ENCODE measurements at regions of chr3 and their contacts with region 1.

Region 1: DNA sequence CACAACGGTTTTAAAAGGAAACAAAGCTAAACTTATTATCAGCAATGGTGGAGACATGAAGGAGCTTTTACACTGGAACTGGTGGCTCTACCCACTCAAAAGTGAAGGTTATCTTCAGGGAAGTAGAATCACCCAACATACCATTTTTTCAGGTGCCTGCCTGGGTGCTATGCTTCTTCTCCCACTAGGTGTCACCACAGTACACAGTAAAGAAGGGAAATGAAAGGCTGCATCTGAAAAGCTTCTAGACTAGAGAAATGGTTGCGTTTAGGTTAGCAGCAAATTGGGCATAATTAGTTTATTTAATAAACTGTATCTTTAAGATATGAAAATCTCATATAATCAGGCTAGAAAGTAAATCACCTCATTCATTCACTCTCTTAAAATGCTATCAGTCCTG is 47.0 kb upstream of the SELENOK start:
- DNase-seq: peak; percentile 25
- ATAC-seq: peak; percentile 67
- H3K4me3 ChIP-seq: no peak overlapping the region
- H3K27ac ChIP-seq: no peak overlapping the region
- H3K4me1 ChIP-seq: no peaks in the 10 kb centered on the region
- H3K27me3 ChIP-seq: no peaks in the 10 kb centered on the region; a peak in 2 of 5 replicates
- CTCF ChIP-seq: peak; percentile 79
- EP300 ChIP-seq: no peak
- POLR2A ChIP-seq: no peak
- RAD21 ChIP-seq: no peak

Region 2: DNA sequence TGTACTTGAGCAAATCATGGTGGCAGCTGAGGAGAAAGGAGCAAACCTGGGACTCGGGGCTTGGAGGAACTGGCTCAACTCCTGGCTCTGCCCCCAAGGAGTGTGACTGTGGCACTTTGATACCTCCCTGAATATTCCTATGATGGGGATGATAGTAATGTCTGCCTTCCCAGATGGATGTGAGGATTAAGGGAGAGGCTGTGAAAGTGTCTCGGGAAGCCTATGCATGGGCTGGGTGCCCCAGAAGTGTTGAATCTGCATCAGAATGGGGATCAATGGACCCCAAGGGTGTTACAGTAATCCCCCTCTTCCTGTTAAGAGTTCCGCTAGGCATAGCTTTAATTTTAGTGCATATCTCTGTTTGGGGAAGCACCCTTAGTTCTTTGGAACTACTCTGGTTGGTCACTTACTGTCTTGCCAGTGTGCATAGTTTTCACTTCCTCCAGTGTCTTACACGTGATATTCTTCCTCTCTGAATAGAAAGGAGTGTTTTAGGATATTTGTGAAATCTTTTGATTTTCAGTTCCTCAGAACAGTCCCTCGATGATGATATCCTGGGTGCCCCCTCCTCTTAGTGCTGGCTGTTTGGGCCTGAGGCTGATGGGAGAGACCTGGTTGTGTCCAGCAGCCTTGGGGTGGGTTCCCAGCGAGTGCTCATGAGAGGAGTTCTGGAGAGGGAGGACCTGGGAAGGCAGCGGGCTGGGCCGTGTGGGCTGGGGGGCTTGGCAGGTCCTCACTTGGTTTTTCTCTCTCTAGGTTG is 190.0 kb before region 1 on chr3:
- CTCF ChIA-PET with region 1: no interaction called
- POLR2A ChIA-PET with region 1: no interaction called
- in situ Hi-C with region 1: no loop called
- intact Hi-C with region 1: no loop called
- DNase-seq: no peak
- ATAC-seq: no peak
- H3K4me3 ChIP-seq: no peak overlapping the region
- H3K27ac ChIP-seq: no peak overlapping the region
- H3K4me1 ChIP-seq: no peaks in the 10 kb centered on the region
- H3K27me3 ChIP-seq: peaks cover 0 to 1% of the 10 kb centered on the region in 2 experiments; a peak in 1 of 5 replicates
- CTCF ChIP-seq: no peak
- EP300 ChIP-seq: no peak
- POLR2A ChIP-seq: no peak
- RAD21 ChIP-seq: no peak

Region 3: GRCh38 chr3:53773611-53774368 is 164.9 kb before region 1 on chr3:
- CTCF ChIA-PET with region 1: no interaction called
- POLR2A ChIA-PET with region 1: no interaction called
- in situ Hi-C with region 1: no loop called
- intact Hi-C with region 1: no loop called
- DNase-seq: no peak
- ATAC-seq: no peak
- H3K4me3 ChIP-seq: no peak overlapping the region
- H3K27ac ChIP-seq: no peak overlapping the region
- H3K4me1 ChIP-seq: no peaks in the 10 kb centered on the region
- H3K27me3 ChIP-seq: no peaks in the 10 kb centered on the region
- CTCF ChIP-seq: no peak
- EP300 ChIP-seq: no peak
- POLR2A ChIP-seq: no peak
- RAD21 ChIP-seq: no peak

Region 4: DNA sequence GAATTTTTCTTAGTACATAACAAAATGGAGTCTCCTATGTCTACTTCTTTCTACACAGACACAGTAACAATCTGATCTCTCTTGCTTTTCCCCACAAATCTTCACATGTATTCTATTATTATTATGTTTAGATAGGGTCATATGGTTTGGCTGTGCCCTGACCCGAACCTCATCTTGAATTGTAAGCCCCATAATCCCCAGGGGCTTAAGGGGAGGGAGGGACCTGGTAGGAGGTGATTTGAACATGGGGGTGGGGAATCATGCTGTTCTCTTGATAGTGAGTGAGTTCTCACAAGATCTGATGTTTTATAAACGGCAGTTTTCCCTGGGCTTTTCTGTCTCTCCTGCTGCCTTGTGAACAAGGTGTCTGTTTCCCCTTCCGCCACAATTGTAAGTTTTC is 39.7 kb after region 1 on chr3:
- CTCF ChIA-PET with region 1: no interaction called
- POLR2A ChIA-PET with region 1: no interaction called
- in situ Hi-C with region 1: no loop called
- intact Hi-C with region 1: no loop called
- DNase-seq: no peak
- ATAC-seq: no peak
- H3K4me3 ChIP-seq: no peak overlapping the region
- H3K27ac ChIP-seq: no peak overlapping the region
- H3K4me1 ChIP-seq: no peaks in the 10 kb centered on the region
- H3K27me3 ChIP-seq: peaks cover 0 to 8% of the 10 kb centered on the region in 2 experiments; a peak in 1 of 5 replicates
- CTCF ChIP-seq: no peak
- EP300 ChIP-seq: no peak
- POLR2A ChIP-seq: no peak
- RAD21 ChIP-seq: no peak

Region 5: DNA sequence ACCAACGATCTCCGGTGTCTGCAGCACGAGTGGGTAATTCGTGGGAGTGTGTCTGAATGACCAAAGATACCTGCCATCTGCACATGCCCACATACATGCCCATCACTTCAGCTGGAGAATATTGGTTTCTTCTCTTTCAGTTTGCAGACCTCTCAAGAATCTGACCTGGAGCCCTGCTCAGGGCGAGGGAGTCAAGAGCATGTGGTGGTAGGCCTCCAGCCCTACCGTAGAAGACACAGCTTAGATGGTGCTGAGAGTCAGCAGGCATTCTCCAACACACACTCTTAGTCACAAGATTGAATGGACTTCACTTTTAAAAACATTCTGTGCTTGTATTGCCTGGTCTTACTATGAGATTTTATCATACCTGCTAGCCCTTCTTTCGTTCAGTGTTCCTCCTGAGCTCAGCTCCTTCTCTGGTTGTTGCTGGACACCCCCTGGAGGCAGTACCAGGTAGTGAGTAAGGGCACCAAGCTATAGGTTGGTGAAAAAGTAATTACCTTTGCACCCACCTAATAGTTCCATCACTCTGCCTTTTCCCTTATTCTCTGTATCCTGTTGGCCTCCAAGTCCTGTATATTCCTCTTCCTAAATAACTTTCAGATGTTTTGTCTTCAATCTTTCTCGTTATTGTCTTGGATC is 435.7 kb after region 1 on chr3:
- CTCF ChIA-PET with region 1: interaction called, 3 read pairs
- POLR2A ChIA-PET with region 1: no interaction called
- in situ Hi-C with region 1: loop called (anchors 10 kb)
- intact Hi-C with region 1: no loop called
- DNase-seq: peak; percentile 15
- ATAC-seq: peak; percentile 84
- H3K4me3 ChIP-seq: no peak overlapping the region
- H3K27ac ChIP-seq: no peak overlapping the region
- H3K4me1 ChIP-seq: no peaks in the 10 kb centered on the region
- H3K27me3 ChIP-seq: 0 out of 5 replicates have a peak, but pooled peaks cover 0 to 3% of the 10 kb centered on the region in 2 experiments
- CTCF ChIP-seq: peak; percentile 58
- EP300 ChIP-seq: no peak
- POLR2A ChIP-seq: no peak
- RAD21 ChIP-seq: no peak

Region 6: DNA sequence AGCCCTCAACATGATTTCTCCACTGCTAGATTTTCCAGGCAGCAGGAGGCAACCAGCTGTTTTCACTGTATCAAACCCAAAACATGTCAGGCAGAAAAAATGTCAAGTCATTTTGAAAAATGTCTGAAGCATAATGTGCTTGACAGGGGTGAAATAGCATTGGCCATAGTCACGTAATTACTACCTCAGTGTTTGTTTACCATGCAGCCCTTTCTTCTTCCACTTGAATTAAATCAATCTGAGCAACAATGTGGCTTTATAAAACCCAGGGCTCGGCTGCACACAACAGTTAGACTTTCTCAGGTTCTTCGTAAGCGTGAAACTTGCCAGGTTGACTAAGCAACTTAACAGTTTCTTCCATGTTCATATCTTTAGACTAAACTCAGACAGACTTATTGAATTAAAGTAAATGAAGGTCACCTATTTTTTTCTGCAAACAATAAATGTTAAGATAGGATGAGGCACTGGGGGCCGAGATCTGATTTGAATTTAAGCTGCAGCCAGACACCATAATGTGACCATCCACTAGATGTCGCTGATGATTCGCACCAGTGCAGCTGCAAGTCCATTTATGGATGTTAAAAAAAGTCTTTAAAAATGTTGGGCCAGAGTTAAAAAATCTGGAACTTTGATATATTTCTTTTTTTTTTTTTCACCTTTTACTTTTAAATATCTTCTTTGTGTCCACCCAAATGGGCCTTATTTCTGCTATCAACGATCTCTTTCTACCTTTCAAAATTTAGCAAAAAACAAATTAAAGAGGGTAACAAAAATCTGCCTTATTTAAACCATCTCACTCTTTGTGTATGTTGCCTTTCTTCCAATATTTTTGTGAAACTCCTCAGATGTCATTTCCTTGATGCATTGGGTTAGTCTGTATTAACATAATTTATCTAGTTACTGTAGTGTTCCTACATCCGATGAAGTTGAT is 489.6 kb after region 1 on chr3:
- CTCF ChIA-PET with region 1: no interaction called
- POLR2A ChIA-PET with region 1: no interaction called
- in situ Hi-C with region 1: no loop called
- intact Hi-C with region 1: loop called (anchors 5 kb)
- DNase-seq: peak; percentile 28
- ATAC-seq: peak; percentile 50; the same call in 2 of the 3 replicates
- H3K4me3 ChIP-seq: no peak overlapping the region
- H3K27ac ChIP-seq: no peak overlapping the region
- H3K4me1 ChIP-seq: no peaks in the 10 kb centered on the region
- H3K27me3 ChIP-seq: no peaks in the 10 kb centered on the region
- CTCF ChIP-seq: peak; percentile 75
- EP300 ChIP-seq: no peak
- POLR2A ChIP-seq: no peak
- RAD21 ChIP-seq: peak; percentile 41

Measured in HepG2 (cell line).